ENCODE measurements at regions of chr13 and their contacts with region 1.

Region 1: DNA sequence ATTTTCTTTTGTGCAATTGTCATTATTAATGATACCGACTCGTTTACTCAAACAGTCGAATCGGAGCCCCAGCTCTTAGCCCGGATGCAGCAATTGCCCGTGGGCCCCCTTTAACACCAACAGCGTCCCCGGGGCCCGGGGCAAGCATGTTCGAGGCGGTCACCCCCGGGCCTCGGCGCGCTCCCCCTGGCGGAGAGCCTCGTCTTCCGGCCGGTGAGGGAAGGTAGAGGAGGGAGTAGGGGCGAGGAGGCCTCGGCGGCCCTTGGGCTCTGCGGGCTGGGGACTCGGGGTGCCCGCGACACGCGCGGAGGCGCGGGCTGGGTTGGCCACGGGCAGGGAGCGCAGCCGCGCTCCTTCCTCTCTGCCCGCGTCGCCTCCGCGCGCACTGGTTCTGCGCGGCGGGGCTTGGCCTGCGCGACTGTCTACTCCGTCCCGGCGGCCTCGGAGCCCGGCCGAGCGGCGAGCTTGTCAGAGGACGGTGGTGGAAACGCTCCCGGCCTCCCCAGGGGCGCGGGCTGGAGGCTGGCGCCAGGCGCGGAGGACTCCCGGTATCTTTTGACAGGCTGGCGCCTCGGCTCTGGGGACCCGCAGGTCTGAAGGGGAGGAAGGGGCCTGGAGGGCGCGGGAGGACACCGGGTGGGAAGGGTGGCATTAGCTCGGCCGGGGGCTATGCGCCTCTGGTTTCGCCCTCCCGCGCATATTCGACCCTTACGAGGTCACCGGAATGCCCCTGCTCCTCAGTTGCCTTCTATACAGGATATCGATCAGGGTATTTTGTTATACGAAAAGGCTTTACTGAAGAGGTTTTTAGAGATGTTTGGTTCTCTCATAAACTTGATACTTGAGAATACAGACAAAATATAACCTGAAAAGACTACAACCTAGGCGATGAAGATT is 1.5 kb downstream of the BIVM start:
- DNase-seq: peak; percentile 26
- H3K4me3 ChIP-seq: peak overlapping the region; percentile 87
- H3K27ac ChIP-seq: peak overlapping the region; percentile 68
- H3K27me3 ChIP-seq: no peaks in the 10 kb centered on the region
- CTCF ChIP-seq: peak; percentile 81

Region 2: GRCh38 chr13:102580552-102581169 is 219.7 kb before region 1 on chr13:
- CTCF ChIA-PET with region 1: interaction called, 15 read pairs
- POLR2A ChIA-PET with region 1: no interaction called
- DNase-seq: peak; percentile 50
- H3K4me3 ChIP-seq: no peak overlapping the region
- H3K27ac ChIP-seq: no peak overlapping the region
- H3K27me3 ChIP-seq: peaks cover 9% of the 10 kb centered on the region
- CTCF ChIP-seq: peak; percentile 80

Region 3: GRCh38 chr13:102651892-102652291 is 148.5 kb before region 1 on chr13:
- CTCF ChIA-PET with region 1: interaction called, 11 read pairs
- POLR2A ChIA-PET with region 1: no interaction called
- DNase-seq: no peak
- H3K4me3 ChIP-seq: no peak overlapping the region
- H3K27ac ChIP-seq: no peak overlapping the region
- H3K27me3 ChIP-seq: no peaks in the 10 kb centered on the region
- CTCF ChIP-seq: no peak

Region 4: DNA sequence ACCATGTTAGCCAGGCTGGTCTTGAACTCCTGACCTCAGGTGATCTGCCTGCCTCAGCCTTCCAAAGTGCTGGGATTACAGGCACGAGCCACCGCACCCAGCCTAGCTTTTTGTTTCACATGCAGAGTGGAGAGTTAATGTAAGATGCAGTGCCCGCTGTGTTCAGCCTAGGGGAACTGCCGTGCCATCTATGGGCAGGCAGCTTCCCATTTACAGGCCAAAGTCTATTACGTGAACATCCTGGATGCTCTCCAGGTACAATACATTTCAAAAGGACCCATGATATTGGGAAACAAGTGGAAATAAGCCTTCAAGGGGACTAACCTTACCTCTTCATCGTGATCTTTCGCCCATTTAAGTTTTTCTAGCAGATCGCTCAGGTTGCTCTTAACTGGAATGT is 11.7 kb before region 1 on chr13:
- CTCF ChIA-PET with region 1: interaction called, 16 read pairs
- POLR2A ChIA-PET with region 1: no interaction called
- DNase-seq: no peak
- H3K4me3 ChIP-seq: no peak overlapping the region
- H3K27ac ChIP-seq: no peak overlapping the region
- H3K27me3 ChIP-seq: no peaks in the 10 kb centered on the region
- CTCF ChIP-seq: no peak

Region 5: DNA sequence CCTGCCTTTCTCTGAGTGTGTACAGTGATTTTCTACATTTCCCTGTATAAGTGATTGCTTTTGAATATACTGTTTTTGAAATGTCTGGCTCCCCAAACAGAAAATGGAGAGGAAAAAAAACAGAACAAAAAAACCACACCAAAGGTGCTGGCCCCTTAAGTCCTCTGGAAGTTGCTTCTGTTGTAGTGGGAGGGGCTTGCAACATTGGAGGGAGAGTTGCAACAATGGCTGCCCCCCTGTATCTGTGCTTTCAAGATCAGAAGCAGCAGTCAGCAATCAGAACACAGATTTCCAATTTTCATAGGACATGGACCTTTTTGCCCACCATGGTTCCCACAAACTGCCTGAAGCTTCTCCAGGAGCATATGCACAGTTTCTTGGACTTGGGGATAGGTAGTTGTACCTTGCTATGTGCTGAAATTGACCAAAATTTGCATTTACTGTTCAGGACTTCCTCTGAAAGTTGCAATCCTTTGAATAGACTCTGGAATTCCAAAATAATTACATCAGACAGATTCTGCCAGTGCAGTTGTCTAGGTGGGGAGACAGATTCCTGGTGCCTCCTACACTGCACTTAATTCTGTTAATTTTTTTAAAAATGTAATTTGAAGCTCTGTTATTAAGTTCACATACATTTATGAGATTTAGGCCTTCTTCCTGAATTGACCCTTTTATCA is 12.4 kb after region 1 on chr13:
- CTCF ChIA-PET with region 1: interaction called, 10 read pairs
- POLR2A ChIA-PET with region 1: no interaction called
- DNase-seq: no peak
- H3K4me3 ChIP-seq: 0 out of 2 replicates have a peak overlapping the region, but pooled peaks have one; percentile 8
- H3K27ac ChIP-seq: peak overlapping the region; percentile 42
- H3K27me3 ChIP-seq: no peaks in the 10 kb centered on the region
- CTCF ChIP-seq: no peak

Region 6: GRCh38 chr13:102825921-102826706 is 25.7 kb after region 1 on chr13:
- CTCF ChIA-PET with region 1: interaction called, 14 read pairs
- POLR2A ChIA-PET with region 1: interaction called, 4 read pairs
- DNase-seq: peak; percentile 71
- H3K4me3 ChIP-seq: peak overlapping the region; percentile 52
- H3K27ac ChIP-seq: peak overlapping the region; percentile 93
- H3K27me3 ChIP-seq: no peaks in the 10 kb centered on the region
- CTCF ChIP-seq: no peak

Region 7: DNA sequence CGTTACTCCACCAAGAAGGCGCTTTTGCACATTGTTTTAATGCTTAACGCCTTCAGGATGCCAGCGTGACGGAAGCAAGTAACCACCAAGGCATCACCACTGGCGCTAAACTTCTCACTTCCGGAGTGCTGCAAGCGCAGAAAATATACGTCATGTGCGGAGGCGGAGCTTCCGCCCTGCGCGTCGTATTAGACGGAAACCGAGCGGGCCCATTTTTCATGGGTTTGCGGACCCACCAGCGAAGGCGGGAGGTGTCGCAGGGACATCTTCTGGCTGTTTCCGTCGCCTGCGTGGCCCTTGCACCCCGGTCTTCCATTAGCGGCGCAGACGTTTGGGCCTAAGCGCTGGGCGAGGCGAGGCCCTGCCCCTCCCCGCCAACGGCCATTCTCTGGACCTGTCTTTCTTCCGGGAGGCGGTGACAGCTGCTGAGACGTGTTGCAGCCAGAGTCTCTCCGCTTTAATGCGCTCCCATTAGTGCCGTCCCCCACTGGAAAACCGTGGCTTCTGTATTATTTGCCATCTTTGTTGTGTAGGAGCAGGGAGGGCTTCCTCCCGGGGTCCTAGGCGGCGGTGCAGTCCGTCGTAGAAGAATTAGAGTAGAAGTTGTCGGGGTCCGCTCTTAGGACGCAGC is 45.4 kb after region 1 on chr13 and contains the start of gene ERCC5:
- CTCF ChIA-PET with region 1: interaction called, 9 read pairs
- POLR2A ChIA-PET with region 1: interaction called, 10 read pairs
- DNase-seq: peak; percentile 79
- H3K4me3 ChIP-seq: peak within 1 kb of the TSS; percentile 95
- H3K27ac ChIP-seq: peak within 1 kb of the TSS; percentile 92
- H3K27me3 ChIP-seq: no peaks in the 10 kb centered on the region
- CTCF ChIP-seq: no peak
- polyA plus RNA-seq, gene ERCC5: 39.2 and 47.6 TPM in 2 replicates

Region 8: GRCh38 chr13:102892503-102892902 is 92.1 kb after region 1 on chr13:
- CTCF ChIA-PET with region 1: no interaction called
- POLR2A ChIA-PET with region 1: no interaction called
- DNase-seq: no peak
- H3K4me3 ChIP-seq: no peak overlapping the region
- H3K27ac ChIP-seq: no peak overlapping the region
- H3K27me3 ChIP-seq: no peaks in the 10 kb centered on the region
- CTCF ChIP-seq: no peak